Dorsolateral prefrontal cortex (tissue), 120 donors: ENCODE measurements at regions of chr10 and their contacts with region 1.

Region 1: DNA sequence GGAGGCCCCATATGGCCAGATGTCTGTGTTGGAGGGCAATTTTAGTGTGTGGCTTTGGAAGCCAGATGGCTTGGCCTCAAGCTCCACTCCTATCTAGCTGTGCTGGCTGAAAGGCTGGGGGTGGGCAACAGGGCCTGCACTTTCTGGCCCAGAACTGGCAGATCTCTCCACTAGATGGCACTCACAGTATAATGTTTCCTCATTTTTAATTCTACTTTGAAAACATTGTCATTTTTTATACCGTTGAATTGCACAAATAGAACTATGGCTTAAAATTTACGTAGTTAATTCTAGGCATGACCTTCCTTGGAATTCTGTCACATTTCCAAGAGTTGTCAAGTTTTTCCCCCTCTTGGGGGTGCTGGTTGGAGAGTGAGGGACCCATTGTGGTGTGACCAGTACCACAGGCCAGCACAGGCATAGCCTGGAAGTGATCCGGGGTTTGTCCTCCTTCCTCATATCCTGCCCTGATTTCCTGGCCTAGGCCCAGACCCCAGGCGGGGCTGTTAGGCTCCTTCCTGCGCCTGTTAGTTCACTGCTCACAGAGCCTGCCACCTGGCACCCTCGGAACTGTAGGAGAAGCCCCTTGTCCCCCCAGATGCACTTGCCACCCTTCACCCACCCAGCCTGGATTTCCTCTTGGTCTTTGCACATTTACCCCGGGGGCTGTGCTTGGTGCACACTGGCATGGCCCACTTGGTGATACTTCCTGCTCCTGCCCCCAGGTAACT is 52.8 kb downstream of the ARHGAP22 start:
- DNase-seq: peak in 4 of 10 donors; percentile 41 to 63 (median 50)
- H3K4me3 ChIP-seq: no peak overlapping the region
- H3K27ac ChIP-seq: peak overlapping the region in 37 of 59 donors; percentile 0 to 77 (median 37)
- H3K27me3 ChIP-seq: no peaks in the 10 kb centered on the region
- CTCF ChIP-seq: peak; percentile 65 to 97 (median 88)

Region 2: DNA sequence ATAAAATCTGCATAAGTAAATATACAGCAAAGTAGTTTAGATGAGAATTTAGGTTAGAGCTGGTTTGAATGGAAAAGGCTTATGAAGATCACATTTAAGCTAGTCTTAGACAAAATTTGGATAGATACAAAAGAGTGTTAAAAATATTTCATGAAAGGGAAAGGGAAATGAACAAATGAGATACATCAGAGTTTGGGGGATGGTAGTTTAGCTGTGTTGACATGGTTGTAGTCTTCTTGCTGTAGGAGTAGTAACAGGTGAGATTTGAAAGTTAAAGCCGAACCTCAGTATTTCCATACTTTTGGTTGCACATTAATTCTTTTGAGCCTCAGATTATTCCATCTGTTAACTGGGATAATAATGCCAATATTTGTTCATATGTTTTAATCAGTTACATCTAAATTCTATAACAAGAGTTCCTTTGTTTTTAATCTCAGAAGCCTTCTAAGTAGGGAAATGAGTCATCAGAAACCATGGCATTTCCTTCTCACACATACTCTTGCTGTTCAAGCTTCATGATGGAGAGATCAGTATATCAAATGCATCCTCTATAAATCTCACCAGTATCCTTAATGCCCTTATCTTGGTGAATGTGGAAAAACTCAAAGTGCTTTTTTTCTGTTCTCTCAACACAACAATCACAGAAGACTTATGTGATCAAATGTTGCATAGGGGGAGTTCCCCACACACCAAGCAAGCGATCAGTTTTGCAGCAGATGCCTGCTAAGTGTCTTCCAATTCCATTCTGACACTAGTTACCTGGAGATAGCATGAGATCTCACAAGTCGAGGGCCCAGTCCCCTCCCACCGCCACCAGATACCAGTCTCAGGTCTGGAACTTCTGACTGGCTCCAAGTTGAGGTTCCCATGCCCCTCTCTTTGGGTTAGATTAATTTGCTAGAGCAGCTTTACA is 160.8 kb before region 1 on chr10:
- intact Hi-C with region 1: no loop called
- DNase-seq: no peak
- H3K4me3 ChIP-seq: no peak overlapping the region
- H3K27ac ChIP-seq: peak overlapping the region in 2 of 59 donors; percentile 18 to 28
- H3K27me3 ChIP-seq: no peaks in the 10 kb centered on the region
- CTCF ChIP-seq: no peak

Region 3: DNA sequence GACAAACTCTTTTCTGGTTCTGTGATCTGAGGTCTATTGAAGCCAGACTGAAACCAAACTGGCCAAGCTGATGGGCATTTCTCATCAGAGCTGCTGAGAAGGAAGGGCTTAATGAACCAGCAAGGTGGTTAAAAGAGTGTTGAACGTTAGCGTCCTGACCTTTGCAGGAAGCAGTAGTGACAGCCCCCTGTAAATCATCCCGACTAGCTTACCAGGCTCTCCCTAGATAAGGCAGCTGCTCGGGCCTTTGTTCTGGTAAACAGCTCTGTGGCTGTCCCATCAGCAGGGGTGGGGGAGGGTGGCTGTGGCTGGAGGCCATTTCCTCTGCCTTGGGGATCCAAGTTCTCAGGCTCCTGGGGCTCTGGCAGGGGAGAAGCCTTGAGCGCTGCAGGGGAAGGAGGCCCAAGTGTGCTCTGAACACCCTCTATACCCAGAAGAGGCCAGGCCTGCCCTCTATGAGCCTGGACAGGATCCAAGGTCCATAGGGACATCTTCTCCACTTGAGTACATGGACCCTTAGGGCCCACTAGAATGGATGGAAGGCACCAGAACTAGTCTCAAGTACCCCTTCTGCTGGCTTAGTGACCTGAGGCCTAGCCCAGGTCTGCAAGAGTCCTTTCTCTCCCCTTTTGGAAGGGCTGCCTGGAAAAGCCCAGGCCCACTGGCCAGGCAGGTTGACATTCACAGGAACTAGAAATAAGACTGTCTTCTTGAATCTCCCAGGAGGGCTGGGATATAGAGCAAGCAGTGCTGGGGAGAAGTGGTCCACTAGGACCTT is 81.7 kb before region 1 on chr10:
- intact Hi-C with region 1: no loop called
- DNase-seq: peak in 4 of 10 donors; percentile 32 to 47 (median 39)
- H3K4me3 ChIP-seq: no peak overlapping the region
- H3K27ac ChIP-seq: peak overlapping the region in 28 of 59 donors; percentile 2 to 80 (median 46)
- H3K27me3 ChIP-seq: no peaks in the 10 kb centered on the region
- CTCF ChIP-seq: no peak

Region 4: GRCh38 chr10:48589266-48589665 is 37.2 kb after region 1 on chr10:
- intact Hi-C with region 1: loop called in 1 of 2 experiments (anchors 5 kb)
- DNase-seq: no peak
- H3K4me3 ChIP-seq: no peak overlapping the region
- H3K27ac ChIP-seq: peak overlapping the region in 32 of 59 donors; percentile 10 to 58 (median 35)
- H3K27me3 ChIP-seq: no peaks in the 10 kb centered on the region
- CTCF ChIP-seq: no peak

Region 5: GRCh38 chr10:48608279-48608681 is 56.3 kb after region 1 on chr10:
- intact Hi-C with region 1: loop called (anchors 2 to 5 kb)
- DNase-seq: peak in 1 of 10 donors; percentile 35
- H3K4me3 ChIP-seq: no peak overlapping the region
- H3K27ac ChIP-seq: peak overlapping the region in 3 of 59 donors; percentile 3 to 38 (median 24)
- H3K27me3 ChIP-seq: peaks cover 0 to 3% (median 0%) of the 10 kb centered on the region in 45 donors
- CTCF ChIP-seq: peak in 54 of 56 donors; percentile 18 to 71 (median 58)

Region 6: GRCh38 chr10:48838834-48839233 is 286.8 kb after region 1 on chr10:
- intact Hi-C with region 1: no loop called
- DNase-seq: no peak
- H3K4me3 ChIP-seq: no peak overlapping the region
- H3K27ac ChIP-seq: no peak overlapping the region
- H3K27me3 ChIP-seq: peaks cover 0 to 4% (median 0%) of the 10 kb centered on the region in 45 donors
- CTCF ChIP-seq: no peak